GM12878 (cell line): ENCODE measurements at regions of chr6 and their contacts with region 1.

Region 1: GRCh38 chr6:137248702-137249101 is 29.5 kb upstream of the IFNGR1 start:
- DNase-seq: no peak
- ATAC-seq: peak; percentile 84
- H3K4me3 ChIP-seq: no peak overlapping the region
- H3K27ac ChIP-seq: peak overlapping the region; percentile 37; the same call in 1 of the 2 replicates
- H3K4me1 ChIP-seq: peaks cover 11% of the 10 kb centered on the region
- H3K27me3 ChIP-seq: no peaks in the 10 kb centered on the region
- CTCF ChIP-seq: no peak
- EP300 ChIP-seq: no peak
- POLR2A ChIP-seq: no peak
- RAD21 ChIP-seq: no peak

Region 2: DNA sequence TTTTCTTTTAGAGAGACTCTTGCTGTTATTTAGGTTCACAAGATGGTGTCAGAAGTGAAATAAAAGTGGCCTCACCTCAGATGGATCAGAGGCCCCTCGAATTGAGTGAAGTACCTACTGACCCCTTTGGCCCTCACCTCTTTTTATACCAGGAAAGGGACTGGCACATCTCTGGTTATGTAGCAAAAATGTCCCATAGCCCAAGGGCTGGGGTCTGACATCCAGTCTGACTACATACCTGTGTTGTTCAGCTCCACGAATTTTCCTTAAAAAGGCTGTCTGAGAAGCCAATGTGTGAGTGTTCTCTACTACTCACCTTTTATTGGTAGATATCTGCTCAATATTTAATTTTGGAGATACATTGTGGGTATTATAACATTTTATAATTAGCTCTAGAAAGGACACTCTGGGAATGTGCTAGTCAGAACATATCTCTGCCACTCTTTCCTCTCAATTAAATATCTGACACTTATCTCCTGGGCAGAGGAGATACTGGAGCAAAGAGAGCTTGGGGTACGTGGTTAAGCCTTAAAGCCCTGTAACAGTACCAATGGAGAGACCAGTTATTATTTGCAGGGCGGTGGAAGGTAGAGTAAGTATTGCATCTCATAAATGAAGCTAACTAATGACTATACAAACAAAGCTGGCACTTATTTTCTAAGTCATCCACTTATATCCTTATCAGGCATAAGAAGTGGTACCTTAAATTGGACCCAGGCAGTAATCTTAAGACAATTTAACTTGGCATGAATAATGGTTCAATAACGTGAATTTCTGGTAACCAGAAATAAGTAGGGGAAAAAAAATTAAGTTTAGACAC is 55.2 kb before region 1 on chr6:
- CTCF ChIA-PET with region 1: no interaction called
- POLR2A ChIA-PET with region 1: no interaction called
- RAD21 ChIA-PET with region 1: no interaction called
- SMC1A ChIA-PET with region 1: no interaction called
- in situ Hi-C with region 1: no loop called
- intact Hi-C with region 1: no loop called
- DNase-seq: no peak
- ATAC-seq: no peak
- H3K4me3 ChIP-seq: no peak overlapping the region
- H3K27ac ChIP-seq: no peak overlapping the region
- H3K4me1 ChIP-seq: peaks cover 16% of the 10 kb centered on the region; the same call in 1 of the 2 replicates
- H3K27me3 ChIP-seq: no peaks in the 10 kb centered on the region
- CTCF ChIP-seq: no peak
- EP300 ChIP-seq: no peak
- POLR2A ChIP-seq: no peak
- RAD21 ChIP-seq: no peak

Region 3: DNA sequence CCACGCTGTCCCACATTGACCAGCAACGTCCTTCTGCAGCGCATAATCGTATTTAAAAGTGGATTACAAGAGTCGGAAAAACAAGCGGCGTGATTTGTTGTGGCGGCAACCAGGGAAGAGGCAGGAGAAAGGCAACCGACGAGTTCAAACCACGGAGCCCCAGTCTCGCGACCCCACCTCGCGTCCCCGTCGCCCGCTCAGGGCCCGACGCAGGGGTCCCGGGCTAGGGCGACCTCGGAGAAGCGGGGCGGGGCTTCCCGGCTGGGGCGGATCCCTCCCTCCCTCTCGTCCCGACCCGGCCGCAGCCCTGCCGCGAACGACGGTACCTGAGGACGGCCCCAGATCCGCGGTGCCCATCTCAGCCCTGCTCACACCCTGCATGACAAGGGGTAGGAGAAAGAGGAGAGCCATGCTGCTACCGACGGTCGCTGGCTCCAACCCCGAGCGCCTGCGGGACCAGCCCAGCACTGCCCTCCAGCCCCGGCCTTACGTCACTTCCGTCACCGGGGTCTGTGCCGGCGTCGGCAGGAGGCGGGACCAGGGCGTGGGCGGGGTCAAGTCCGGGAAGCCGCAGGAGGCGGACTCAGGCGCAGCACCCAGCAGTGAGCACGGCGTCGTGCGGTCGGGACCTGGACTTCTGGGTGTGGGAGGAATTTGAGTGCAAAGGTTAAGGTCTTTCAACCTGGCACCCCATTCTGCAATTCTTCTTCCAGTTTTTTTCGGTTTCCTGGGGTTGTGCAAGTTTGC is 29.6 kb before region 1 on chr6 and contains the start of gene IFNGR1:
- CTCF ChIA-PET with region 1: interaction called, 3 read pairs
- POLR2A ChIA-PET with region 1: interaction called, 12 read pairs
- RAD21 ChIA-PET with region 1: interaction called, 14 read pairs
- SMC1A ChIA-PET with region 1: interaction called, 32 read pairs
- in situ Hi-C with region 1: no loop called
- intact Hi-C with region 1: no loop called
- DNase-seq: peak; percentile 81
- ATAC-seq: peak; percentile 79
- H3K4me3 ChIP-seq: peak within 1 kb of the TSS; percentile 91
- H3K27ac ChIP-seq: peak within 1 kb of the TSS; percentile 94
- H3K4me1 ChIP-seq: peaks cover 15% of the 10 kb centered on the region
- H3K27me3 ChIP-seq: no peaks in the 10 kb centered on the region
- CTCF ChIP-seq: no peak
- EP300 ChIP-seq: no peak
- POLR2A ChIP-seq: peak; percentile 94
- RAD21 ChIP-seq: no peak
- polyA plus RNA-seq, gene IFNGR1: 182 to 296 TPM

Region 4: DNA sequence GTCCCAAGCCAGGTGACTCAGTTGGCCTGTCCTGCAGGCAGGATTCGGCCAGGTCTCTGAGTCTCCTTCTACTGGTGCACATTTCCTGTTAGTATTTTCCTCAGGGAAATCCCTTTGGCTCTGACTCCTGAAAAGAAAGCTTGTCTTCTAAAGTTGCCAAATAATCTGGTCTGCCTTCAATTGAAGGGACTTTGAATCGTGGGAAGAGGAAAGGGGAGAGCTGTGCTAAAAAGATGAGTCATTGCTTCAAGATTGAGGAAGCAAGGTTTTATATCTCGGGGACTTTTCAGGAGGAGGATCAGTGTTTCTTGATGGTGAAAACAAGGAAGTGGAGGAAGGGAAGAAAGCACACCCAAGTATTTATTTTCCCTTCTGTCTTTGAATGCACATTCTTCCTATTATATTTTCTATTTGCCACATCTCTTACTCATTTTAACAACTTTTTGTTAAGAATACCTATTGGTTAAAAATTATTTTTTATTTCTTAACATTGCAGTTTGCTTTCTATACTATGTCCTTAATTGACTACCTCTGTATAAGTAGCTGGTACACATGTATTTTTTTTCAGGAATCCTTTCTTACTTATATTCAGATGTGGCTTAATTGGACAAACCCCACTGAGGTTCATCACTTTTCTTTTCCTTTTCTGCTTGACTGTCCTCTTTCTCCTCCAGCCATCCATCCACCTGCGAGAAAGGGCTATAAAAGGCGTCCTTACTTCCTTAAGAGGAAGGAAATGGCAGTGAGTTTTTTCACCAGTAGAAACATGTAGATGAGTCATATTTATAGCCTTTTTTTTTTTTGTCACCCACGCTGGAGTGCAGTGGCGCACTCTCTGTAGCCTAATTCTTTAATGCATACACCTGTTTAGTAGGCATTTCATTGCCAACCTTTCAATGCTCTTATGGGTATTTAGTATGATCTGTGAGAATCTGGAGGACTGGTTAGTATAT is 14.5 kb before region 1 on chr6:
- CTCF ChIA-PET with region 1: interaction called, 19 read pairs
- POLR2A ChIA-PET with region 1: interaction called, 29 read pairs
- RAD21 ChIA-PET with region 1: interaction called, 80 read pairs
- SMC1A ChIA-PET with region 1: interaction called, 64 read pairs
- in situ Hi-C with region 1: no loop called
- intact Hi-C with region 1: no loop called
- DNase-seq: no peak
- ATAC-seq: peak; percentile 79
- H3K4me3 ChIP-seq: peak overlapping the region; percentile 28; the same call in 1 of the 2 replicates
- H3K27ac ChIP-seq: peak overlapping the region; percentile 76
- H3K4me1 ChIP-seq: peaks cover 52% of the 10 kb centered on the region
- H3K27me3 ChIP-seq: no peaks in the 10 kb centered on the region
- CTCF ChIP-seq: no peak
- EP300 ChIP-seq: peak in 1 of 2 experiments; percentile 60; a peak in 1 of 4 replicates
- POLR2A ChIP-seq: no peak
- RAD21 ChIP-seq: no peak

Region 5: DNA sequence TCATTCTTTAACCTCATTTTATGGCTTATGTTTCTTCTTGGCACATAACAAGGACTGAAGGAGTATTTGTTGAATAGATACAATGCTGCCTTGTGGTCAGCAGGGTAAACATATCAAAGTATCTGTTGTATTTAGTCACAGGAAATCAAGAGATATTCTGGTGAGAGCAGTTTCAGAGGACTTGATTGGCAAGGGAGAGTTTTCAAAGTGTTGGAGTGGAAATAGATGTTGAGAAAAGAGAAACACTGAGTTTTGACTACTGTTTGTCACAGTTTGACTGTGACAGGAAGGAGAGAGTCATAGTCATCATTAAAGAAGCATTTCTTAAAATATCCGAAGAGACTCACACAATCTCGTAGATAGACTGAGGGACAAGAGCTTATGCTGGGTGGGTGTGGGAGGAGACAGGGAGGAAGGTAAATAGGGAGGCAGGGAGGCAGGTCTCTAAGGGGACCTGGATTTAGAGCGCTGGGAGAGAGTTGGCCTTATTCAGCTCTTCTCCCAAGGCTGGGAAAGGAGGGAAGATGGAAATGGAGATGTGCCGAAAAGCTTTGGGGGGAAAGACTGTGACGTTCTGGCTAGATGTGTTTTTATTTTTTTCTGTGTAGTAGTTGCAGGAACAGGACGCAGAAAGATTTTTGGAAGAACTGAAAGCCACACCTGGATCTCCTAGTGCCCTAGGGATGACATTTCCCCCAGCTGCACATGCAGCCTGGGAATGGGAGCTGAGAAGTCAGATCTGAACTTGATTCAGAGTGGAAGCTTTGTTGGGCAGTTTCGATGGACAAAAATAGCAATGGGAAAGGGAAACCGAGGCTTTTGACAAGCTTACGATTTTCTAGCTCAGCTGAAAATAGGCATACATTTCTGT is 35.5 kb after region 1 on chr6:
- CTCF ChIA-PET with region 1: interaction called, 4 read pairs
- POLR2A ChIA-PET with region 1: no interaction called
- RAD21 ChIA-PET with region 1: interaction called, 3 read pairs
- SMC1A ChIA-PET with region 1: interaction called, 13 read pairs
- in situ Hi-C with region 1: no loop called
- intact Hi-C with region 1: no loop called
- DNase-seq: peak; percentile 79
- ATAC-seq: peak; percentile 88
- H3K4me3 ChIP-seq: peak overlapping the region; percentile 45; the same call in 1 of the 2 replicates
- H3K27ac ChIP-seq: peak overlapping the region; percentile 76
- H3K4me1 ChIP-seq: peaks cover 25% of the 10 kb centered on the region
- H3K27me3 ChIP-seq: no peaks in the 10 kb centered on the region
- CTCF ChIP-seq: no peak
- EP300 ChIP-seq: peak; percentile 33 to 35; a peak in 2 of 4 replicates
- POLR2A ChIP-seq: no peak
- RAD21 ChIP-seq: no peak